GM23248 (cell line): ENCODE measurements at regions of chr14 and their contacts with region 1.

Region 1: GRCh38 chr14:78598041-78598920 is 428.1 kb downstream of the NRXN3 start:
- DNase-seq: peak; percentile 74
- H3K4me3 ChIP-seq: no peak overlapping the region
- H3K27ac ChIP-seq: no peak overlapping the region
- H3K4me1 ChIP-seq: no peaks in the 10 kb centered on the region
- H3K27me3 ChIP-seq: peaks cover 8% of the 10 kb centered on the region; the same call in 1 of the 2 replicates

Region 2: GRCh38 chr14:77862154-77862786 is 736.0 kb before region 1 on chr14:
- in situ Hi-C with region 1: loop called (anchors 25 kb)
- DNase-seq: peak; percentile 51
- H3K4me3 ChIP-seq: no peak overlapping the region
- H3K27ac ChIP-seq: no peak overlapping the region
- H3K4me1 ChIP-seq: peaks cover 4% of the 10 kb centered on the region; the same call in 1 of the 2 replicates
- H3K27me3 ChIP-seq: no peaks in the 10 kb centered on the region

Region 3: DNA sequence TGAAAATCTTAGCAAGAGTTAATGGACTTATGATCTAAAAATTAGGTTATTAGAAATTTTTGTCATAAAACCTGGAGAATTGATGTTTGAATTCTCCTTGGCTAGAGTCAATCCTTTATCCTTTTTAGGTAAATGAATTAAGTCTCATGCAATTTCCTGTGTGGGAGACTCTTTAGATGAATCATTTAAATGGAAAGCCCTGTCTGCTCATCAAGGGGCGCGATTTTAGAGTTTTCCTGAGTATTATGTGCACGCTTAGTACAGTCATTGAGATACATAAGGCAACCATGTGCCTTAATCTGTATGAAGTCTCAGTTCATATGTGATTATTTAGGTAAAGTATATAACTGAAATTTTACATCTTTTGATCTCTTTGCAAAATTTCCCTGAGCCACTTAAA is 546.6 kb after region 1 on chr14:
- in situ Hi-C with region 1: no loop called
- DNase-seq: peak; percentile 13
- H3K4me3 ChIP-seq: no peak overlapping the region
- H3K27ac ChIP-seq: no peak overlapping the region
- H3K4me1 ChIP-seq: no peaks in the 10 kb centered on the region
- H3K27me3 ChIP-seq: no peaks in the 10 kb centered on the region; the same call in 1 of the 2 replicates